CD4-positive, alpha-beta memory T cell (primary cell): ENCODE measurements at regions of chr22 and their contacts with region 1.

Region 1: DNA sequence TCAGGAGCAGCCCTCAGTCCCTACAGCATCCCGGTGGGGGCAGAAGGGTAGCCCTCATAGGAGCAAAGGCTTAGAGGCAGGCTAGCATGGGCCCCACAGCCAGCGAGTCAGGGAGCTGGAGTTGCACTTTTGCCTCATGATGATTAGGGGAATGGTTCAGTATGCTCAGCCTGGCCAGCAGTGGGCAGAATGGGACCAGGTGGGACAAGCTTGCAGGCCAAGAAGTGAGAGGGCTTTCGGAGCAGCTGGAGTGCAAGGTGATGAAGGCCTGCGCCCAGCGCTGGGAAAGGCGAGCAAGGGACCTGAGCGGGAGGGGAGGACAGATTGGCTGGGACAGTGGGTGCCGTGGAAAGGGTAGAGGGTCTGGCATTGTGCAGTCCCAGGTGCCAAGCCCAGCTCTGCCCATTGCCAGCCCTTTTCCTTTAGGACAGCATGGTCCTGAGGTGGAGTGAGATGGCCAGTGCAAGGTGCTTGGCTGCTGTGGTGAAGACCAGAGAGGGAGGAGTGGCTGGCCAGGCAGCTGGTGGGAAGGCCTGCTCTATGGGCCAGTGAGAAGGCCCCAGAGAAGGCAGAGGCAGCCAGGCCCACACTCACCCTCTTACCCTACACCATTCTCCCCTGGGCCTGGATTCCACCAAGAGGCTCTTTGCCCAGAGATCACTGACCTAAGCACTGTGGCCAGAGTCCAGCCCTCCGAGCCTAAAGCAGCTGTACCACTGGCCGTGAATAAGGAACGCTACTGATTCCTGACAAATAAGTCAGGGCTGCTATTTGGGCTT is 47.9 kb upstream of the SUSD2 start:
- DNase-seq: peak in 3 of 5 donors; percentile 31 to 42 (median 38)
- H3K4me3 ChIP-seq: no peak overlapping the region
- H3K4me3 Mint-ChIP-seq: peak overlapping the region in 1 of 8 donors; percentile 42
- H3K27ac ChIP-seq: no peak overlapping the region
- H3K27ac Mint-ChIP-seq: peak overlapping the region; percentile 30 to 88 (median 51)
- H3K4me1 ChIP-seq: peaks cover 9% of the 10 kb centered on the region
- H3K4me1 Mint-ChIP-seq: peaks cover 4 to 19% (median 10%) of the 10 kb centered on the region in 4 donors
- H3K27me3 ChIP-seq: no peaks in the 10 kb centered on the region
- H3K27me3 Mint-ChIP-seq: no peaks in the 10 kb centered on the region

Region 2: DNA sequence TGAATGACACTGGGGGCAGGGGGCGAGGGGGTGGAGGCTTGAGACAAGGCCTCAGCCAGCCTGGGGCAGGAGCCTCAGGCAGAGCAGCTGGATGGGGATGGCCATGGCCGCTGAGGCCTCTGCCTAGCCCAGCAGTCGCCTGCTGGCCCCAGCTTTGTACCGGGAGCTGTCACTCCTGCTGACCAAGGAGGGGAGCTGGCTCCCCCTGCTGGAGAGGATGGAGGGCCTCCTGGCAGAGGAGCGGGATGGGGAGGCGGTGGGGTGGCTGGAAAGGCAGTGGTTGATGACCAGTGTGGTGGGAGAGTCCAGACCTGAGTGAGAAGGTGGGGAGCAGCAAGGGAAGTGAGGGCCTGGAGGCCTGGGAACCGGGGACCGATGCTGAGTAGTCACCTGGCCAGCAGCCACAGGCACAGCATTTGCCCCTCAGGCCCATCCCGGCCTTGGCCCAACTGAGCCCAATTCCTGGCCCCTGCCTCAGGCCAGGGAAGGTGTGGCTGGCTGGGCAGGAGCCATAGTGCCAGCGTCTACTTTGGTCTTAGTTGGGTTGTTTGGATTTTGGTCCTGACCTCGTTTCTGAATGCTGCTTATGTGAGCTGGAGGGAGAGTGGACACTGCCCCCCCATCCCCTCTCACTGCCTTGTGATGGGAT is 41.9 kb after region 1 on chr22:
- CTCF ChIA-PET with region 1: interaction called, 104 read pairs
- POLR2A ChIA-PET with region 1: interaction called, 13 read pairs
- intact Hi-C with region 1: loop called (anchors 1 kb)
- DNase-seq: peak; percentile 48 to 55 (median 49)
- H3K4me3 ChIP-seq: no peak overlapping the region
- H3K4me3 Mint-ChIP-seq: no peak overlapping the region
- H3K27ac ChIP-seq: no peak overlapping the region
- H3K27ac Mint-ChIP-seq: peak overlapping the region in 3 of 7 donors; percentile 13 to 83 (median 79)
- H3K4me1 ChIP-seq: no peaks in the 10 kb centered on the region
- H3K4me1 Mint-ChIP-seq: no peaks in the 10 kb centered on the region
- H3K27me3 ChIP-seq: no peaks in the 10 kb centered on the region
- H3K27me3 Mint-ChIP-seq: no peaks in the 10 kb centered on the region

Region 3: DNA sequence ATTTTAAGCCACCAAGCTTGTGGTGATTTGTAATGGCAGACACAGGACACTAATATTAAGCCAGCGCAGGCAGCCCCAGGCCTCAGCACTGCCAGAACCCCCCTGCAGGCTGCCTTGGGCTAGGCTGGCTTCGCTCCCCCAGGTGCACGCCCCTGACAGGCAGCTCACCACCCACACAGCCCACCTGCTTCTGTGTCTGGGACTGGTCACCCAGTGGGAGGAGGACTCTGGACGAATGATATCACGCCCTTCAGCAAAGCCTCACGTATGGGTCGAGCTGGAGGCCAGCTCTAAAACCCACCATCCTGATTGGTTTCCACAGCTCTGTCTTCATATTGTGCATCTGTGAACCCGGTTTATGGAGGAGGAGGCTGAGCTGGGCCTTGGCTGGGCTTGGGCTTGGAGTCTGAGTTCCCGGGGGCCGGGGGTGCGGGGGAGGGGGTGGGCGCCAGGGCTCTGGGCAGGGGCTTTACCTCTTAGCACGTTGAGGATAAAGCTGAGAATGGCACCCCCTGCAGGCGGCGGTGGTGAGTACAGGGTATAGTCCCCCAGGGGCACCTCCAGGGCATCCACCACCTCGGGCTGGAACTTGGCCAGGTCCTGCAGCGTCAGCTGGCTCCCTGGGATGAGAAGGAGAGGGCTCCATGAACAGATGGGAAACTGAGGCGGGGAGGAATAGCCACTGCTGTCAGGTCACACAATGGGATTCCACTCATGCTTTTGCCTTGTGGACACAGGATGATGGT is 97.7 kb after region 1 on chr22:
- CTCF ChIA-PET with region 1: interaction called, 4 read pairs
- POLR2A ChIA-PET with region 1: no interaction called
- intact Hi-C with region 1: loop called (anchors 1 kb)
- DNase-seq: peak; percentile 38 to 48 (median 39)
- H3K4me3 ChIP-seq: no peak overlapping the region
- H3K4me3 Mint-ChIP-seq: no peak overlapping the region
- H3K27ac ChIP-seq: no peak overlapping the region
- H3K27ac Mint-ChIP-seq: no peak overlapping the region
- H3K4me1 ChIP-seq: no peaks in the 10 kb centered on the region
- H3K4me1 Mint-ChIP-seq: no peaks in the 10 kb centered on the region
- H3K27me3 ChIP-seq: no peaks in the 10 kb centered on the region
- H3K27me3 Mint-ChIP-seq: peaks cover 0 to 2% of the 10 kb centered on the region in 2 donors